Psoas muscle (tissue), 8 donors: ENCODE measurements at regions of chr1 and their contacts with region 1.

Region 1: GRCh38 chr1:35845766-35846165 is 37.2 kb upstream of the AGO1 start:
- DNase-seq: no peak
- ATAC-seq: no peak
- H3K4me3 ChIP-seq: no peak overlapping the region
- H3K27ac ChIP-seq: no peak overlapping the region
- H3K4me1 ChIP-seq: peaks cover 8% of the 10 kb centered on the region
- H3K27me3 ChIP-seq: no peaks in the 10 kb centered on the region
- CTCF ChIP-seq: no peak

Region 2: DNA sequence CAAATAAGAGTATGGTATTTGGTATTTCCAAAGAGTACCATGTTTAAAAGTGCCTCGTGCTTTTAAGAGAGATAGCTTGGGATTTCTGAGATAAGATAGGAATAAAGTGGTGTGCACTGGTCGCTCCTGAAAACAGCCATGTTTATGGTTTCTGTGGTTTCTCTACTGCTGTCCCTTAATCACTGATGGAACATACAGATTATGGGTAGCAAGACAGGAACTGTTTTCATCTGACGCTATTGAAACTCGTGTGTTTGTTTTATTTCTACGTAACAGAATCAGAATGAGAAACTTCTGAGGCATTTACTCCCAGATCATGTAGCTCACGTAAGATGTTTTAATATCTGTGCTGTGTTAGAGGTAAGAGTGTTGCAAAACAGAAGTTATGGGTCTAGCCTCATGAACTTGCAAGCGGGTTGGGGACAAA is 414.6 kb before region 1 on chr1:
- intact Hi-C with region 1: no loop called
- DNase-seq: no peak
- ATAC-seq: no peak
- H3K4me3 ChIP-seq: no peak overlapping the region
- H3K27ac ChIP-seq: no peak overlapping the region
- H3K4me1 ChIP-seq: no peaks in the 10 kb centered on the region
- H3K27me3 ChIP-seq: no peaks in the 10 kb centered on the region
- CTCF ChIP-seq: no peak

Region 3: DNA sequence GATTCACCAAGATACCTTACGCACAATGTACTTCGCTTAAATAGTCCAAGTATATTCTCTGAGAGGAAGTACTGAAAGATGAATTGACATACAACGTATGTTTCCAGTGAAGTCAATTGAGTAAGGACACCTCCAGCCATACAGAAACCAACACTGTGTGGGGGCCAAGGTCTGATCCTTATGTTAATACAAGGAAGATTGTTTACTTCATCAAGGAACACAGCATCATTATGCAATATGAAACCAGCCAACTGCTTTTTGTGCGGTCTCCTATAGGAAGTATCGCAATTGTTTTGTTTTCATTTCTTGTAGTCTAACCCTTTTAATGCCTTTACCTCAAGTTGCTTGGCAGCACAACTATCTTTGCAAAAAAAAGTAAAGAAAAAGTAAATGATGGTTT is 209.9 kb after region 1 on chr1:
- intact Hi-C with region 1: loop called in 1 of 2 experiments (anchors 10 kb)
- DNase-seq: no peak
- ATAC-seq: no peak
- H3K4me3 ChIP-seq: no peak overlapping the region
- H3K27ac ChIP-seq: no peak overlapping the region
- H3K4me1 ChIP-seq: no peaks in the 10 kb centered on the region
- H3K27me3 ChIP-seq: no peaks in the 10 kb centered on the region
- CTCF ChIP-seq: no peak